ENCODE measurements at regions of chr1 and their contacts with region 1.

Region 1: DNA sequence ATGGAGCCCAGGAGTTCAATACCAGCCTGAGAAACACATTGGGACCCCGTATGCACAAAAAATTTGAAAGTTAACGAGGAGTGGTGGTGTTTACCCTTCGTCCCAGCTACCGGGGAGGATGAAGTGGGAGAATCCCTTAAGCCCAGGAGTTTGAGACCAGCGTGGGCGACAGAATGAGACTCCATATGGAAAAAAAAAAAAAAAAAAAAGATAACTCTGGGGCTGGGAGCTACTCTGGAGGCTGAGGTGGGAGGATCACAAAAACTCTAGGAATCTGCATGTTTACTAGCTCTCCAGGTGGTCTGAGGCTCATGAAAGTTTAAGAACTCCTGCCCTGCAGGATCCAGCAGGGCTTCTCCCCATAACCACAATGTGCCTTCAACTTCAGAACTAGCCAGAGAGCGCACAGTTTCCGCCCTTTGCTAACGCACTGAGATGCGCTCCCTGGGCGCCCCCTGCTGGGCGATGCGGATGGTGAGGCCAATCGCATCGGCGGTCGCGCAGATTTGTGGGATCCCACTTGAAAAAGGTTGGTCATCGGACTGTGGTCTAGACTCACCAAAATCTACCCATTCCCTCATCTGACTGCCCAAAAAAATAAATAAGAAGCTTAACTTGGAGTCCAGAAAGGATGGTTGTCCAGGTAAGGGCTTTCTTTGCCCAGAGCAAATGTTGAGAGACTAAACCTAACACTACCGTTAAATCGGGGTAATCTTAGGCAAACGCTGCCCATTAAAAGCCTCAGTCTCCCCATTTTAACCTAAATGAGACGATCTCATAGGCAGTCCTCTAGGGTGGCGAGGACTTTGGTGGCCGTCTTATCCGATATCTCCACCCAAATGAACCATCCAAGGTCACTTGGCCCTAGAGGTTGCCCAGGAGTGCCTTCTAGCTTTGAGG is 8.8 kb downstream of the ZNF683 start:
- DNase-seq: peak; percentile 92
- ATAC-seq: peak; percentile 77
- H3K4me3 Mint-ChIP-seq: no peak overlapping the region
- H3K27ac Mint-ChIP-seq: no peak overlapping the region
- H3K4me1 Mint-ChIP-seq: peaks cover 28% of the 10 kb centered on the region
- H3K27me3 Mint-ChIP-seq: peaks cover 11% of the 10 kb centered on the region

Region 2: GRCh38 chr1:26284597-26285360 is 79.0 kb before region 1 on chr1:
- CTCF ChIA-PET with region 1: interaction called, 4 read pairs
- POLR2A ChIA-PET with region 1: no interaction called
- intact Hi-C with region 1: loop called (anchors 2 to 5 kb)
- DNase-seq: peak; percentile 99
- ATAC-seq: peak; percentile 66
- H3K4me3 Mint-ChIP-seq: peak overlapping the region; percentile 61
- H3K27ac Mint-ChIP-seq: peak overlapping the region; percentile 99
- H3K4me1 Mint-ChIP-seq: peaks cover 87% of the 10 kb centered on the region
- H3K27me3 Mint-ChIP-seq: no peaks in the 10 kb centered on the region

Region 3: GRCh38 chr1:26378088-26378878 is 14.5 kb after region 1 on chr1:
- CTCF ChIA-PET with region 1: interaction called, 24 read pairs
- POLR2A ChIA-PET with region 1: no interaction called
- intact Hi-C with region 1: no loop called
- DNase-seq: peak; percentile 80
- ATAC-seq: peak; percentile 95
- H3K4me3 Mint-ChIP-seq: peak overlapping the region; percentile 36
- H3K27ac Mint-ChIP-seq: peak overlapping the region; percentile 47
- H3K4me1 Mint-ChIP-seq: peaks cover 61% of the 10 kb centered on the region
- H3K27me3 Mint-ChIP-seq: no peaks in the 10 kb centered on the region

Region 4: GRCh38 chr1:26399034-26399433 is 35.2 kb after region 1 on chr1:
- CTCF ChIA-PET with region 1: interaction called, 4 read pairs
- POLR2A ChIA-PET with region 1: no interaction called
- intact Hi-C with region 1: loop called in 1 of 2 experiments (anchors 1 kb)
- DNase-seq: no peak
- ATAC-seq: no peak
- H3K4me3 Mint-ChIP-seq: no peak overlapping the region
- H3K27ac Mint-ChIP-seq: no peak overlapping the region
- H3K4me1 Mint-ChIP-seq: peaks cover 3% of the 10 kb centered on the region
- H3K27me3 Mint-ChIP-seq: peaks cover 9% of the 10 kb centered on the region